MCF 10A (cell line): ENCODE measurements at regions of chr11 and their contacts with region 1.

Region 1: DNA sequence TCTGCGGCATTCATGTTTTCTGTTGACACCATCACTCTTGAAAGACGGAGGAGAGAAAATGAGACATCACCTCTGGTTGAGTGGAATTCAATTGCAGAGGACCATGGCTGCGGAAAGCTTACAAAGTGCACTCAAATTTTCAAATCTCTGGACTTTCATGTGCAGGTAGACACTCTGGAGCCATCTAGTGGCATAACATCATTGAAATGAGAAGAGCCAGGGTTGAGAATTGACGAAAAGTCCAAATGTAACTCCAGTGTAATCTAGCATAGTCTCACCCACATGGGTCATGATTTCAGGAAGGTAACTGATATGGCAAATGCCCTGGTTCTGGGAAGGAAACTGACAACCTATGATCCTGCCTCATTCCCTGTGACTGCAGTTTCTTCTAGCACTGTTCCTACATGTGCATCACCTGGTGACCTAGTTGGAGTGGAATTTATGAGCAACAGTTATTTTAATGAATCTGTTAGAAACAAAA is 687.8 kb downstream of the KCNA4 start:
- DNase-seq: peak; percentile 65
- H3K4me3 Mint-ChIP-seq: no peak overlapping the region
- H3K27ac Mint-ChIP-seq: peak overlapping the region; percentile 23
- H3K4me1 Mint-ChIP-seq: peaks cover 8% of the 10 kb centered on the region
- H3K27me3 Mint-ChIP-seq: no peaks in the 10 kb centered on the region
- CTCF ChIP-seq: peak; percentile 76

Region 2: DNA sequence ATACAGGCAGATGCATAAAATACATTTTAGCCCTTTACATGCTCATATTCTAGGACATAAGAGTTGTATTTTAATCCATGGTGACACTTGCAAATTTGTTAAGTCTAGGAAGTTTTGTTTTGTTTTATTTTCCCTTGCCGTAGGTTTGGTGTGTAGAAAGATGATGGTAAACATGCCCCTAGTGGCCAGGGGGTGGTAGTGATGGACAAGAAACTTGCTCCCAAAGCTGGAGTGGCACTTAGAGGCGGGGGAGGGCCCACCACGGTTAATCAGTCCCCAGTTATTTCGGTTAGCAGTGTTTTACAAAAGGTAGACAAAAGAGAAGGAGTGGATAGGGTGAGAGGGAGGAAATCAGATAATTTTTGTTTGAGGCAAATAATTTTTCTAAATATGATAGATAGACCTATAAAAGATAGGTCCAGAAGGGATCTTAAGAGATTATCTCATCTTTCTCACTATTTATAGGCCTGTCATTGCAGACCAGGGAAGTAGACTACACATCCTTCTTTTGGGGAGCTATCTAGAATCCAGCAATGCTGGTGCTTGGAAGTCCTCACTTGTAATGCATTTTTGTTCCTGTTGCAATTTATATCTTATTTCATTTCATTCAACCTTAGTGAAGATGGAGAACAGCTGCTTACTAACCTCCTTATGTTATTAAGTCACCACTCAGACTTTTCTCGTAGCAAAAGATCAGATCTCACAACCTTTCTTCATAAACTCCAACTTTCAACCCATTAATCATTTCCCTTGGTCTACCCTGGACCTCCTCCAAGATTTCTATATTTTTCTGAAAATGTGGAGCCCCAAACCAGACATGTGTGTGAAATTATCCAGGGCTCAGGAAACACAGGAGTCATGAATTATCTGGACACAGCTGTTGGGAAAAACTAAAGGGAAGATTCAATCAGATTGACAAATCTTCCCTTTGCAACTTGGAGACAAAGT is 1622.9 kb before region 1 on chr11:
- CTCF ChIA-PET with region 1: interaction called, 56 read pairs
- POLR2A ChIA-PET with region 1: no interaction called
- intact Hi-C with region 1: no loop called
- DNase-seq: peak; percentile 50
- H3K4me3 Mint-ChIP-seq: no peak overlapping the region
- H3K27ac Mint-ChIP-seq: no peak overlapping the region
- H3K4me1 Mint-ChIP-seq: peaks cover 6% of the 10 kb centered on the region
- H3K27me3 Mint-ChIP-seq: no peaks in the 10 kb centered on the region
- CTCF ChIP-seq: peak; percentile 54

Region 3: DNA sequence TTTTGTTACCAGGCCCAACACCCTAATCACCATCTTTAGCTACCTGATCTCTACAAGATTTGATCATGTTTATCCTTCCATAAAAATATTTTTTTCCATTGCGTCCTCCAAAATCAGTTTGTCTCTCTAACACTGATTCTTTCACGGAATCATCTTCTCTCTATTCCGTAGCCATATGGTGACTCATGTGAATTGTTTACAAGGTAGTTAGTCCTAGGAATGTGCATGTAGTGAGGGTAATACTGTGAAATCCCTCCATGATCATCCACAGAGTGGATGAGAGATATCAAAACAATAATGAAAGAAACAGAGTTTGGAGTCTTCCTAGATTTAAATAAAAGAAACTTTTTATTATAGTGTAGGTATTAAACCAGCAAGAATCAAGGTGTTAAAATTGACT is 990.6 kb before region 1 on chr11:
- CTCF ChIA-PET with region 1: no interaction called
- POLR2A ChIA-PET with region 1: no interaction called
- intact Hi-C with region 1: no loop called
- DNase-seq: no peak
- H3K4me3 Mint-ChIP-seq: no peak overlapping the region
- H3K27ac Mint-ChIP-seq: no peak overlapping the region
- H3K4me1 Mint-ChIP-seq: peaks cover 8% of the 10 kb centered on the region
- H3K27me3 Mint-ChIP-seq: no peaks in the 10 kb centered on the region
- CTCF ChIP-seq: no peak

Region 4: GRCh38 chr11:29159552-29160465 is 169.2 kb before region 1 on chr11:
- CTCF ChIA-PET with region 1: interaction called, 22 read pairs
- POLR2A ChIA-PET with region 1: no interaction called
- intact Hi-C with region 1: loop called (anchors 2 kb)
- DNase-seq: peak; percentile 80
- H3K4me3 Mint-ChIP-seq: no peak overlapping the region
- H3K27ac Mint-ChIP-seq: no peak overlapping the region
- H3K4me1 Mint-ChIP-seq: peaks cover 11% of the 10 kb centered on the region
- H3K27me3 Mint-ChIP-seq: no peaks in the 10 kb centered on the region
- CTCF ChIP-seq: peak; percentile 77

Region 5: GRCh38 chr11:29260939-29261705 is 67.9 kb before region 1 on chr11:
- CTCF ChIA-PET with region 1: interaction called, 63 read pairs
- POLR2A ChIA-PET with region 1: interaction called, 8 read pairs
- intact Hi-C with region 1: no loop called
- DNase-seq: peak; percentile 83
- H3K4me3 Mint-ChIP-seq: no peak overlapping the region
- H3K27ac Mint-ChIP-seq: peak overlapping the region; percentile 85
- H3K4me1 Mint-ChIP-seq: peaks cover 18% of the 10 kb centered on the region
- H3K27me3 Mint-ChIP-seq: no peaks in the 10 kb centered on the region
- CTCF ChIP-seq: no peak

Region 6: DNA sequence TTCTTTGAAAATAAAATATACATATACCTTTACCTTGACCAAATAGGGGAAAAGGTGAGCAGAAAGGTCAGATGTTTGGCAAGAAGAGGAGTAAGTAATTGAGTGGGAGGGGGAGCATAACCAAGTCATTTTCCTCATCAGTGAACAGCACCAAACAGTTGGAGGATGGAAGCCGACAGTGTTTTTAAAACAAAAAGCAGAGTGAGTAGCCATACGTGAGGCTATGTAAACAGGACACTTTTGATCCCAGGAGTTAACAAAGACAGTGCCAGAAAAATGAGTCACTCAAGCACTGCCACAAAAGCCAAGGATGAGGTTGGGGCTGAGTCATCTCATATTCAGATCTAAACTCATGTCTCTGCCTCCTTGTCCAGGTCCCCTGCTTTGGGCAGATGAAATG is 46.9 kb before region 1 on chr11:
- CTCF ChIA-PET with region 1: interaction called, 31 read pairs
- POLR2A ChIA-PET with region 1: interaction called, 6 read pairs
- intact Hi-C with region 1: no loop called
- DNase-seq: peak; percentile 96
- H3K4me3 Mint-ChIP-seq: peak overlapping the region; percentile 8
- H3K27ac Mint-ChIP-seq: peak overlapping the region; percentile 88
- H3K4me1 Mint-ChIP-seq: peaks cover 29% of the 10 kb centered on the region
- H3K27me3 Mint-ChIP-seq: no peaks in the 10 kb centered on the region
- CTCF ChIP-seq: no peak

Region 7: GRCh38 chr11:29312817-29313216 is 16.2 kb before region 1 on chr11:
- CTCF ChIA-PET with region 1: interaction called, 34 read pairs
- POLR2A ChIA-PET with region 1: no interaction called
- intact Hi-C with region 1: no loop called
- DNase-seq: peak; percentile 25
- H3K4me3 Mint-ChIP-seq: no peak overlapping the region
- H3K27ac Mint-ChIP-seq: no peak overlapping the region
- H3K4me1 Mint-ChIP-seq: peaks cover 18% of the 10 kb centered on the region
- H3K27me3 Mint-ChIP-seq: no peaks in the 10 kb centered on the region
- CTCF ChIP-seq: no peak

Region 8: GRCh38 chr11:29553990-29554389 is 225.0 kb after region 1 on chr11:
- CTCF ChIA-PET with region 1: no interaction called
- POLR2A ChIA-PET with region 1: no interaction called
- intact Hi-C with region 1: no loop called
- DNase-seq: no peak
- H3K4me3 Mint-ChIP-seq: no peak overlapping the region
- H3K27ac Mint-ChIP-seq: no peak overlapping the region
- H3K4me1 Mint-ChIP-seq: no peaks in the 10 kb centered on the region
- H3K27me3 Mint-ChIP-seq: no peaks in the 10 kb centered on the region
- CTCF ChIP-seq: no peak